Right ventricle myocardium inferior (tissue), 1 donor: ENCODE measurements at regions of chr1 and their contacts with region 1.

Region 1: GRCh38 chr1:231211005-231211857 is 29.8 kb upstream of the GNPAT start:
- DNase-seq: peak; percentile 87
- ATAC-seq: peak; percentile 69

Region 2: GRCh38 chr1:230797942-230798418 is 413.3 kb before region 1 on chr1:
- intact Hi-C with region 1: loop called (anchors 2 kb)
- DNase-seq: no peak
- ATAC-seq: peak; percentile 91

Region 3: DNA sequence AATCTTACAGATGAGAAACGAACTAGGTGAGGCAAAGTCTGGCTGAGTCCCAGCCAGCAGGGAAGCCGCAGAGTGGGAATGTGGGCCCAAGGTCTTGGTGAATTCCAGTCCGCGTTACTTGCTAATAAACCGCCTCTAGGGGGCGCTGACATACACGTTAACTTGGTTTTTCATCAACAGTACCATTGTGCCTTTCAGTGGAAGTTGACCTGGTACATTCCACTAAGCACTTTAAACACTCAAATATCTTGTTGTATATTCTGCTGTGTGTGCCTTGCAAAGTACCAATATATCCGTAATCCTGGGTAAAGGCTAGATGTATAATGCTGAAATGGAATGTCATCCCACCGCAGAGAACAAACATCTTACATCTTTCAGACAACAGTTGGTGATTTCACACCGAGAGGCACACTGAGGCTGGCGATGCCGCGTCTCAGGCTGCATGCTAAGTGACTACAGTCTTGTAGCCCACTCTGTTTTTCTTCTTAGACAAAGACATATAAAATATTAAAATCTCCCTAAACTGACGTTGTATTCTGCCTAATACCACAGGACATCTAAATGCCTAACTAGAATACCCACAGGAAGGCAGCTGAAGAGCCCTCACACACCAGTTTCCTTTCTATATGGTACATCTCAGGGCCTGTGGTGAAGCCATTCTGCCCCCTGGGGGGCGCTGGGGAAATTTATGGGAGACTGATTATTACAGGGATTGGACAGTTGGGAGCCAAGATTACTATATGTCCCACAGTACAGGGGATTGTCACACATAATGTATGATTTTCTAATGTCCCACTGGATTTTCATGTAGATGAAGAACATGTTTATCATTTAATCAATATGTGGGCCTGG is 293.7 kb before region 1 on chr1:
- intact Hi-C with region 1: loop called (anchors 5 kb)
- DNase-seq: peak; percentile 67
- ATAC-seq: peak; percentile 86

Region 4: DNA sequence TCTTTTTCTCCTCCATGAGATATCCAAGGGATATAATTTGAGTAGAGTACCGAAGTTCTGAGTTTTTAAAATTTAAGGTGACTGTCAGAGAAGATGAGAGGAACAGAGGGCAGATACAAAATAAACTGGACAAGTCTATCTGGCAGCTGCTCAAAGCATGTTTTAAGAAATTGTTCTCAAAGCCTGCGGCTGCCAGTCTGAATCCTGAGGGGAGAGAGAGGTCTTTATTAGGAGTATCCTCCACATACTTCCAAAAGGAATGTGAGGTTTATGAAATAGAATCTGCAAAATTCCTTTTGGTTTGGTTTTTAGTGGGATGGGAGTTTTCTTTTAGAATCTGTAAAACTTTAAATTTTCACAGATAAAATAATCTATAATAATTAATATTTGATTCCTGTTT is 273.9 kb before region 1 on chr1:
- intact Hi-C with region 1: loop called (anchors 5 kb)
- DNase-seq: no peak
- ATAC-seq: no peak

Region 5: GRCh38 chr1:230978491-230979388 is 232.5 kb before region 1 on chr1 and contains the starts of genes ARV1 and TTC13:
- intact Hi-C with region 1: loop called (anchors 2 kb)
- DNase-seq: peak; percentile 100
- ATAC-seq: peak; percentile 100
- total RNA-seq, gene ARV1: 17.3 TPM
- total RNA-seq, gene TTC13: 6.7 TPM